Dendritic cell treated with granulocyte-macrophage colony-stimulating factor and Interleukin-4, amounts not matched to agents 40 ng/mL and 50 ng/mL, for 4 days (primary cell): ENCODE measurements at regions of chr15 and their contacts with region 1.

Region 1: GRCh38 chr15:58182460-58183163 is 44.4 kb downstream of the AQP9 start:
- H3K4me3 Mint-ChIP-seq: no peak overlapping the region
- H3K27ac Mint-ChIP-seq: no peak overlapping the region
- H3K4me1 Mint-ChIP-seq: peaks cover 6% of the 10 kb centered on the region
- H3K27me3 Mint-ChIP-seq: no peaks in the 10 kb centered on the region

Region 2: GRCh38 chr15:57866149-57866736 is 316.4 kb before region 1 on chr15:
- intact Hi-C with region 1: loop called (anchors 1 kb)
- H3K4me3 Mint-ChIP-seq: no peak overlapping the region
- H3K27ac Mint-ChIP-seq: no peak overlapping the region
- H3K4me1 Mint-ChIP-seq: no peaks in the 10 kb centered on the region
- H3K27me3 Mint-ChIP-seq: peaks cover 40% of the 10 kb centered on the region

Region 3: GRCh38 chr15:58043192-58043903 is 139.3 kb before region 1 on chr15:
- intact Hi-C with region 1: loop called (anchors 1 kb)
- H3K4me3 Mint-ChIP-seq: no peak overlapping the region
- H3K27ac Mint-ChIP-seq: no peak overlapping the region
- H3K4me1 Mint-ChIP-seq: peaks cover 15% of the 10 kb centered on the region
- H3K27me3 Mint-ChIP-seq: peaks cover 1% of the 10 kb centered on the region

Region 4: GRCh38 chr15:58115692-58116091 is 66.9 kb before region 1 on chr15:
- intact Hi-C with region 1: loop called (anchors 1 kb)
- H3K4me3 Mint-ChIP-seq: no peak overlapping the region
- H3K27ac Mint-ChIP-seq: no peak overlapping the region
- H3K4me1 Mint-ChIP-seq: peaks cover 14% of the 10 kb centered on the region
- H3K27me3 Mint-ChIP-seq: peaks cover 2% of the 10 kb centered on the region

Region 5: GRCh38 chr15:58221591-58222241 is 39.1 kb after region 1 on chr15:
- intact Hi-C with region 1: no loop called
- H3K4me3 Mint-ChIP-seq: no peak overlapping the region
- H3K27ac Mint-ChIP-seq: no peak overlapping the region
- H3K4me1 Mint-ChIP-seq: no peaks in the 10 kb centered on the region
- H3K27me3 Mint-ChIP-seq: no peaks in the 10 kb centered on the region